Cardiac septum (tissue), 1 donor: ENCODE measurements at regions of chr1 and their contacts with region 1.

Region 1: GRCh38 chr1:164689672-164690598 is 131.0 kb downstream of the PBX1 start:
- DNase-seq: no peak

Region 2: DNA sequence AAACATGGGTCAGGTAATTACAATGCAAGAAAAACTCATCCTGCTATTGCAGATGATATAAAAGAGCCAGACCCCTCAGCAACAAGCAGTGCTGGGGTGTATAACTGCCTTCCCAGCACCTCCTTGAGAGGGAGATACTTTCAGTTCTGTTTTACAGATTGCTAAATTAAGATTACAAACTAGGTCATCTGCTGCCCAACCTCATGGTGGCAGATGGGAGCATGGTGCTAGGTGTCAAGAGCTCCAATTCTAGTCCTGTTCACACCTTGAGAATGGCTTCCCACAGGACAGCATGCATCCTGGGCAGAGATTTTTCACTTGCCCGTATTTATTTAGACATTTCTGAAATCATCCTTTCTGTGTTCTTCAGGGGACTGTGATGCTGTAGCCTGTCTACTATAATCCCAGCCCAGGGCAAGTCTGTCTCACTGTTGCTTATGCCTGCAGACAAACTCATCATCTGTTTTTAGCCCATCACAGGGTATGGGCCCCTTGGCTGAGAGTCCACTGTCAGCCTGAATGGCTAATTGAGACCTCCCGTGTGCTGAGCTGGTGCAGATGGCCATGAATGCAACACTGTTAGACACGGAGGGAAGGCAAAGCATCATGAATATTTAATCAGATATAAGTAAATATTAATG is 171.1 kb before region 1 on chr1:
- intact Hi-C with region 1: no loop called
- DNase-seq: no peak

Region 3: DNA sequence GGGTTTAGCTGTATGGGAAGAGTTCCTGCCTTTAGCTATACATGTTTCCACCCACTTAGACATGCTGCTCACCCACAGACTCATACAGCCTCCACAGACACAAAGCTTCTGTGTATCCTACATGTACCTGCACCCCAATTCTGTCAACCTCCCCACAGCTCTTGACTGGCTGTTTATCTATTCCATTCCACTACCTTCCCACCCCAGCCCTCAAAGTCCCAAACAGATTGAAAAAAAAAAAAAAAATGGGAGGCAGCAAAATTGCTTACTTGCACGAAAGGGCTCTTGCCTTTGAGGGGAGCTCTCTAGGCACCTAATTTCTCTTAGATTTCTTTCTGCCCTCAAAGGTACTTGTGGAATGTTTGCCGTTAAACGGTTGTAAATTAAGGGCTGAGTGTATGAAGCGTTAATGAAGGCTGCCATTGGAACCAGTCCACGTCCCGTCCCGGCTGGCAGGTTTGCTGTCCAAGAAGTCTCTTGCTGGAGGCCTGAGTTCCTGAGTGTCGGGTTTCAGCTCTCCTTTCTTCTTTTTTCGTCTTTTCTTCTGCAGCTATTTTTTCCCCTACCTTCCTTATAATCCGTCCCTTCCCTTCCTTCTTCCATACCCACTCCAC is 87.3 kb before region 1 on chr1:
- intact Hi-C with region 1: no loop called
- DNase-seq: no peak

Region 4: GRCh38 chr1:164644774-164645235 is 45.1 kb before region 1 on chr1:
- intact Hi-C with region 1: loop called (anchors 5 kb)
- DNase-seq: no peak